ENCODE measurements at regions of chr12 and their contacts with region 1.

Region 1: DNA sequence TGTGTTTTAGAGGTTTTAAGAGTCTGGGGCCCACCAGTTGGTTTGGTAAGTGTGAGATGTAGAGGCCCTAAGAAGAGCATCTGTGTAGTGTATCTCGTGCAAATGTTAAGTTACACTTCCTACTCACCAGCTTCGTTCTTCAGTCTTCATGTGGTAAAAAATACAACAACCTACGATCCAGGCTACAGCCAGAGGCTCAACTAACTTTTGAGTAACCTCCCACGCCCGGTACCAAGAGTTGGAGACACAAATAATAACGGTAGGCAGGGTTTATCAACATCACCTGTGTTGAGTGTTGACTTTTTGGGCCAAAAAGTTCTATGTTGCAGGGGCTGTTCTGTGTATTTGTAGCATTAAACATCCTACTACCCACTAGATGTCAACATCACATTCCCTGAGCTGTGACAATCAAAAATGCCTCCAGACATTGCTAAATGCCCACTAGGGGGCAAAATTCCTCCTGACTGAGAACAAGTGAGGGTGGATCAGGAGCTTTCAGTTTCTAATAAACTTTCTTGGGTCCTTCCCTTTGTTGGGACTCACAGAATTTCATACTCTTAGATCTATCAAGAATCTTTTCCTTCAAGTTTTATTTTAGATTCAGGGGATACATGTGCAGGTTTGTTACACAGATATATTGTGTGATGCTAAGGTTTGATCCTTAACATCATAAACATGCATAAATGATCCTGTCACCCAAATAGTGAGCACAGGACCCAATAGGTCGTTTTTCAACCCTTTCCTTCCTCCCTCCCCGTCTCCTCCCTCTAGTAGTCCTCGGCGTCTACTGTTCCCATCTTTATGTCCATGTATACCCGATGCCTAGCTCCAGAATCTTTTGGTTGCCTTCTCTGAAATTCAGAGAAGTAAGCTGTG is 94.7 kb downstream of the SLC2A13 start:
- DNase-seq: no peak

Region 2: DNA sequence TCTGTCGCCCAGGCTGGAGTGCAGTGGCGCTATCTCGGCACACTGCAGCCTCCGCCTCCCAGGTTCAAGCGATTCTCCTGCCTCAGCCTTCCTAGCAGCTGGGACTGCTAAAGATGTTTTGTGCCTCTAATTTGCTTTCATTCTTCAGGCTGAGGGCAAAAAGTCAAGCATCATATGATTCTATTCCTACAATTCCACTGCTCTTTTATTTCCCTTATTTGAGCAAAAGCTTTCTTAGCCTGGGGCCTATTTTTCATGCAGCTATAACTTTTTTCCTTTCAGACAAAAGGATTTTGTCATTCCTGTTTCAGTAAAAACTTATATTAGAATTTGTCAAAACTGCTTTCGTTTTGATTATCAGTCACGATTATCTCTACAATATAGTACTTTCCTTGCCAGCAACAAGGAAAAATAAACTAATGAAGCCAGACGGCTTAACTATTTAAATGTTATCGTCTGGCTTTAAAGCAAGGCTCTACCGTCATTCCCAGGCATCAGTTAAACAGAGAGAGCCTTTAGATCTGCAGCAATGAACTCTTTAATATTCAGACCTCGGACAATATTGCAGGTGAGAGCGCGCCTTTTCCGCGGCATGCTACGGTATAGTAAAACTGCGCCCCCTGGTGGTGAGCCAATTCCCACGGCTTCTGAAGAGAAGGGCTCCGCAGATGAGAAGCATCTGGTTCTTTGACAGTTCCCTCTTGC is 96.1 kb after region 1 on chr12:
- intact Hi-C with region 1: loop called (anchors 5 kb)
- DNase-seq: peak; percentile 95

Region 3: DNA sequence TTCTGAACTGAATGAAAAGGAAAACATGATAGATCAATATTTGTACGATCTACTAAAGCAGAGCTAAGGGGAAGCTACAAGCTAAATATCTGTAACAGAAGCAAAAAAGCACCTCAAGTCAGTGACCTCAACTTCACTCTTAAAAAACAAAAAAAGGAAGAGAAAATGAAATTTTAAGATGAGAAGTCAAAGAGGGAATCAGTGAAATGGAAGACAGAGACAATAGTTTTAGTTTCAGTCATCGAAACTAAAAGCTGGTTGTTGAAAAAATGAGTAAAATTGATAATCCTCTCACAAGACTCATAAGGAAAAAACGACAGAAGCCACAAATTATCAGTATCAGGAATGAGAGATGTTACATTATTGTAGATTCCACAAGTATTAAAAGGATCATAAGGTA is 106.7 kb after region 1 on chr12:
- intact Hi-C with region 1: no loop called
- DNase-seq: no peak

Region 4: GRCh38 chr12:40959041-40959440 is 947.9 kb after region 1 on chr12:
- intact Hi-C with region 1: no loop called
- DNase-seq: no peak